BJ (cell line): ENCODE measurements at regions of chr10 and their contacts with region 1.

Region 1: DNA sequence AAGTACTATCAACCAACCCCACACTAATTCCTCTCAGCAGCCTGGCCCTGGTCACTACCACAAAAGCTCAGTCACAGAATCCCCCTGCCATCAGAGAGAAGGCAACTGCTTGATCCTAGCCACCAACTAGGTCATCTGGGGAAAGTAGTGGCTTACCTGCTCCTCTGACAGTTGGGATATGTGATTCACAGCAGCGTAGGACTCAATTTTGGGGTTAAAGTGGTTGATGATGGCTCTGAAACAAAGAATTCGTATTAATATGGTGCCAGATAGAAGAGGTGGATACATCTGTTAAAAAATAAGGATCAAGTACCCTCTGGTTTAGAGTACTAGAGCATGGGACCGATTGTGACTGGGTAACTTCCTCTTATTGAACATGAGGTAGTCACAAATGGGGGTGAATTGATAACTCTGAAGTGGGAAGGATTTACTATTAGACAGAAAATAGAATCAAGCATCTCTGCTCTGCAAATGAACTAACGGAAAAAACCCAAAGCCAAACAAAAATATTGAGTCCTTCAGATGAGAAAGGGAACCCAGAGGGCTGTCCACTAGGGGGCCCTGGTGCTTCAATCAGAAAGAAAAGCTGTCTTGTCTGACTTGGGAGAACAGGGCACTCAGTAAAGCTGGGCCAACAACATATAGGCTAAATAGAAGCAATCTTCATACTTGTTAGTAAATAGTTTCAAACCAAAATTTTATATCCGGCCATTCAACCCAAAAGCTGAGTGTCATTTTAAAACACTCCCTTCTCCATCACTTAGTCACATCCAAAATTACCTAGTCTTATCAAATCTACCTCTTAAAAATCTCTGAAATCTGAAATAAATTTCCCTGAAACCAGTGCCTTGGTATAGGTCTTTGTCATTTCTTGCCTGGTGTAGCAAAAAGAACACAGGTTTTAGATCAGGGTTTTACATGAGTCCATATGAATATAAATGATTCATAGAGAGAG is 45.9 kb upstream of the KCNIP2 start:
- DNase-seq: no peak
- H3K4me3 ChIP-seq: no peak overlapping the region
- H3K27me3 ChIP-seq: no peaks in the 10 kb centered on the region
- CTCF ChIP-seq: peak; percentile 90

Region 2: DNA sequence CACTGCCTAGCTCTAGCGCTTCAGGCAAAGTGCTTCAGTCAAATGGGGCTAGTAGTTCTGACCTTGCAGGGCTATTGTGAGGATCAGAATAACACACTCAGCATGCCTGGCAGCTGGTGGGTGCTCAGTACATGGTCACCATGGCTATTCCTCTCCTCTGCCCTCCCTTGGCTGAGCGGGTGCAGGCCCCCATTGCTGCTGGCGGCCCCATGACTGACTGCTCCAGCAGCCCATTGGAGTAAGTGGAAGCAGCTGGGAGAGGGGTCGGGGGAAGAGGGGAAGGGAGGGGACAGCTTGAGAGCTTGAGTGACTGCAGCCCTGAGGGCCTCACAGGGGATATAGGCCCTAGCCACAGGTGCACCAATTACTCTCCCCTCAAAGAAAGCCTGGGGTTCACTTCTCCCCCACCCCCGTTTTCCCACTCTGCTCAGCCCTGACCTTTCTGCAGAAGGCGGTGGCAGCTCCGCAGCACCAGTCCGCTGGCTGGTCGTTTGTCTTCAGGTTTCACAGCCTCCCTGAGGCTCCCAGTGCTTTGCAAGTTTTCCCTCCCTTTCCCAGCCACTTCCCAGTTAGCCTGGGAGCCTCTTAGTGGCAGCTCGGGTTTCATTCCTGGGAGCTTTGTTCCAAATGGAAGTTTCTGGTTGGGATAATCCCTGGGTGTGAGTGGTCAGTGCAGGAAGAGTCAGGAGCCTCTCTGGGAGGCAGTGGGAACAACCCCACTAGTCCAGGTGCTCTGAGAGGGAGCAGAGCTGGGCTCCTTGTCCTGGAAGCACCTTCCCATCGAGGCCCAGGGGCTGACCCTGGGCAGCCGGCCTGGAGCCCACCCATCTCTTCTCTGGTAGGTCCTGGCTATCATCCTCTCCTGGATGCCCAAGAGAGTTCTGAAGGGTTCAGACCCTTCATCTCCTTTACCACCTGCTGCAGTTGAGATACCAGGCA is 130.0 kb before region 1 on chr10:
- CTCF ChIA-PET with region 1: no interaction called
- POLR2A ChIA-PET with region 1: no interaction called
- DNase-seq: no peak
- H3K4me3 ChIP-seq: no peak overlapping the region
- H3K27me3 ChIP-seq: peaks cover 28% of the 10 kb centered on the region
- CTCF ChIP-seq: no peak

Region 3: DNA sequence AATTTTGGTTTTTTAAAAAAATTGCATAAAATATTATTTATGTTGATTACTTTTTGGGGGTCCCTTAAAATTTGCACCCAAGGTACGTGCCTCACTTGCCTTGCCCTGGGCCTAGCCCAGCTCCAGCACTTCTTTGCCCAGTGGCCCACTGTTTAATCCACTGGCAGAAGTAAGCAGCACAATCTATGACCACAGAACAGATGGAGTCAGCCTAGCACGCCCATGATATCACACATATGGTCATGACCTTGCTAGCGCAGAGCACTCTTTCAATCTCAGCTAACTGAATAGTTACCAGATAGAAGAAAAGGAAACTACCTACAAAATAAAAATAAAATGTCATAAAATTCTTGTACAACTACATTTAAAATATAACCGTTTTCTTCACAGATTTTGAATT is 76.9 kb before region 1 on chr10:
- CTCF ChIA-PET with region 1: no interaction called
- POLR2A ChIA-PET with region 1: no interaction called
- DNase-seq: no peak
- H3K4me3 ChIP-seq: no peak overlapping the region
- H3K27me3 ChIP-seq: no peaks in the 10 kb centered on the region
- CTCF ChIP-seq: no peak

Region 4: GRCh38 chr10:101938316-101939281 is 49.1 kb after region 1 on chr10:
- CTCF ChIA-PET with region 1: interaction called, 12 read pairs
- POLR2A ChIA-PET with region 1: no interaction called
- DNase-seq: peak; percentile 71
- H3K4me3 ChIP-seq: no peak overlapping the region
- H3K27me3 ChIP-seq: no peaks in the 10 kb centered on the region
- CTCF ChIP-seq: no peak